ENCODE measurements at regions of chr17 and their contacts with region 1.

Region 1: GRCh38 chr17:9644910-9645751 is at the start of gene USP43:
- DNase-seq: peak; percentile 73
- ATAC-seq: peak; percentile 55
- H3K4me3 ChIP-seq: peak within 1 kb of the TSS; percentile 77
- H3K27ac ChIP-seq: peak within 1 kb of the TSS; percentile 92
- H3K4me1 ChIP-seq: peaks cover 17% of the 10 kb centered on the region; the same call in 1 of the 2 replicates
- H3K27me3 ChIP-seq: no peaks in the 10 kb centered on the region
- CTCF ChIP-seq: no peak
- total RNA-seq, gene USP43: 8.1 and 10.0 TPM in 2 replicates

Region 2: GRCh38 chr17:7915611-7916382 is 1729.3 kb before region 1 on chr17 and contains the start of gene RNF227:
- CTCF ChIA-PET with region 1: interaction called, 11 read pairs
- POLR2A ChIA-PET with region 1: no interaction called
- intact Hi-C with region 1: no loop called
- DNase-seq: peak; percentile 83
- ATAC-seq: peak; percentile 76
- H3K4me3 ChIP-seq: peak within 1 kb of the TSS; percentile 69
- H3K27ac ChIP-seq: no peak within 1 kb of the TSS
- H3K4me1 ChIP-seq: peaks cover 17% of the 10 kb centered on the region
- H3K27me3 ChIP-seq: no peaks in the 10 kb centered on the region
- CTCF ChIP-seq: no peak
- total RNA-seq, gene RNF227: 0.11 and 0.52 TPM in 2 replicates

Region 3: DNA sequence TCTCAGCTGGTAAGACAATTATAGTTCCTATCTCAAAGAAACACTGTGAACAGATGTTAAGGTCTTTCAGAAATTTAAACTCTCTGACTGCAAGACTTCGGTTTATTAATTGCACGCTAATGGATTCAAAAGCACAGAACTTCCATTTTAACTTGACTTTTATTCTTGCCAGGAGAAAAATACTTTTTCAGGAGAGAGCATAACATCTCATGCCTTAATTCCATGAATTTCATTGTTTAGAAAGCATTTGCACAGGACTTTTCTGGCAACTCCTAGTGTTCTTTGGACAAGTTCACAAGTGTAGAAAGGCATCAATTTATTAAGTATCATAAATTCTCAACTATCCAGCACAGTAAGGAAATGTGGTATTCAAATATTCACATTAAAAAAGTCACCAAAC is 92.0 kb before region 1 on chr17:
- CTCF ChIA-PET with region 1: interaction called, 10 read pairs
- POLR2A ChIA-PET with region 1: no interaction called
- intact Hi-C with region 1: no loop called
- DNase-seq: no peak
- ATAC-seq: no peak
- H3K4me3 ChIP-seq: no peak overlapping the region
- H3K27ac ChIP-seq: no peak overlapping the region
- H3K4me1 ChIP-seq: no peaks in the 10 kb centered on the region
- H3K27me3 ChIP-seq: no peaks in the 10 kb centered on the region
- CTCF ChIP-seq: no peak

Region 4: DNA sequence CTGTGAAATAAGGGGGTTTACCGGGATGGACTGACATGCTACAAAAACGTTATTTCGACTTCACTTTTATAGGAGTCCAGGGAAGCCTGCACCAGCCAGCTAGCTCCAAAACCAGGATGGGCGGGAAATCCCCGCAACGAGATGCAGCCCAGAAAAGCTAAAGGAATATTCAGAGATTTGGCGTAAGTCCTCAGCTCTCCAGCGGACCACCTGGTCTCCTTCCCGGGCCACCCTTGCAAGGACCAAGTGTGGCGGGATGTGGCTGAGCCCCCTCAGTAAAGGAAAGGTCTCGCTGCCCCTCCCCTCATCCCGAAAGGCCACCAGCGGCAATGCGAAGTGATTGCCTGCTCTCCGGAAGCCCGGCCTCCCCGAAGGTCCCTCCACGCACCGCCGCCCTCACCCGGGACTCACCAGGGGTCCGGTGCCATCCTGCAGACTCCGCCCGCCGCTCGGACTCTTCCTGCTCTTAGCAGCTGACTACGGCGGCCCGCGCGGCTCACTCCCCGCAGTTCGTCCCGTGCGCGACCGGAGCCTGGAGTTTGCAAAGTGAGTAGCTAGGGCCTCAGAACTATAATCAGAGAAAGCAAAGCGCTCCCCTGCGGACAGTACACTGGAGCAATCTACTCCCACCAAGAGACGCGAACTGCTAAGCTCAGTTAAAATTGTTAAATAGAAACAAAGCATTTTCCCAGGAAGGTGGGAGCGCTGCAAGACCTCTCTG is 69.6 kb before region 1 on chr17 and contains the start of gene STX8:
- CTCF ChIA-PET with region 1: no interaction called
- POLR2A ChIA-PET with region 1: no interaction called
- intact Hi-C with region 1: loop called (anchors 2 kb)
- DNase-seq: peak; percentile 74
- ATAC-seq: peak; percentile 92
- H3K4me3 ChIP-seq: peak within 1 kb of the TSS; percentile 85
- H3K27ac ChIP-seq: no peak within 1 kb of the TSS
- H3K4me1 ChIP-seq: 0 out of 2 replicates have a peak, but pooled peaks cover 6% of the 10 kb centered on the region
- H3K27me3 ChIP-seq: no peaks in the 10 kb centered on the region
- CTCF ChIP-seq: no peak
- total RNA-seq, gene STX8: 33.6 and 57.4 TPM in 2 replicates

Region 5: GRCh38 chr17:9676742-9677387 is 31.7 kb after region 1 on chr17:
- CTCF ChIA-PET with region 1: no interaction called
- POLR2A ChIA-PET with region 1: no interaction called
- intact Hi-C with region 1: loop called (anchors 1 kb)
- DNase-seq: peak; percentile 94
- ATAC-seq: peak; percentile 96
- H3K4me3 ChIP-seq: peak overlapping the region; percentile 26; the same call in 1 of the 2 replicates
- H3K27ac ChIP-seq: peak overlapping the region; percentile 94
- H3K4me1 ChIP-seq: peaks cover 19% of the 10 kb centered on the region
- H3K27me3 ChIP-seq: no peaks in the 10 kb centered on the region
- CTCF ChIP-seq: no peak

Region 6: GRCh38 chr17:9729034-9729650 is 84.0 kb after region 1 on chr17:
- CTCF ChIA-PET with region 1: no interaction called
- POLR2A ChIA-PET with region 1: no interaction called
- intact Hi-C with region 1: loop called (anchors 10 kb)
- DNase-seq: peak; percentile 65
- ATAC-seq: peak; percentile 35; the same call in 1 of the 2 replicates
- H3K4me3 ChIP-seq: no peak overlapping the region
- H3K27ac ChIP-seq: no peak overlapping the region
- H3K4me1 ChIP-seq: peaks cover 6% of the 10 kb centered on the region
- H3K27me3 ChIP-seq: no peaks in the 10 kb centered on the region
- CTCF ChIP-seq: peak; percentile 85

Measured in PC-3 (cell line).